ENCODE measurements at regions of chr16 and their contacts with region 1.

Region 1: DNA sequence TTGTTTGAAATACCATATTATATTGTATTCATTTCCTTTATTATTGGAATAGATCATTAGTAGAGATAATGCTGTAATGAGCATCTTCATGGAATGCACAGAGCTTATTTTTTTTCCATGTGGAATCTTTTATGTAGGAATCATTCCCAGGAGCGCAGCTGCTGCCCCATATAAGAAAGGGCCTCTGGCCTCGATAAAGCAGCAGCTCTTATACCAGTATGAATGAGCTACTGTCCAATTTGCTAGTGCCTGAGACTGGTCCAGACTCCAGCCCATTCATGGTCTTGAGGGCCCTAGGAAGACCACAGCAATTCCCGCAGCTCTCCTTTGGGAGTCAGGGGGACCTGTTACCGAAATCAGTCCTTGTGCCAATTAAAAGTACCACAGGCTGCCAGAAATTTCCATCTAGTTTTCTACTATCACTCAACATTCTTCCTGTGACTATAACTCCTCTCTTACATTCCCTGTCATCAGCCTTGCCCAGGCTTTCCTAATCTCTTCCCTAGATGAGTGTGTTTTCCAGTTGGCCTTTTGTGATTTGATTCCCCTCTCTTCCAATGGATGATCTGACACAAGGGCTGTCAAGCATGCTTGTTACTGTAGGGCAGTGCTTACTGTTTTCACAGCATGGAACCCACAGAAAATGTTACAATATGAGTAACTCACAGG is 1.9 kb downstream of the ZNF843 start:
- DNase-seq: no peak
- H3K4me3 ChIP-seq: no peak overlapping the region
- H3K27ac ChIP-seq: no peak overlapping the region
- H3K4me1 ChIP-seq: no peaks in the 10 kb centered on the region
- H3K27me3 ChIP-seq: peaks cover 3 to 11% of the 10 kb centered on the region in 2 experiments
- CTCF ChIP-seq: no peak
- POLR2A ChIP-seq: no peak

Region 2: GRCh38 chr16:30957456-30958174 is 483.0 kb before region 1 on chr16 and contains the start of gene SETD1A:
- CTCF ChIA-PET with region 1: interaction called, 16 read pairs
- POLR2A ChIA-PET with region 1: no interaction called
- dilution Hi-C with region 1: no loop called
- intact Hi-C with region 1: loop called (anchors 1 kb)
- DNase-seq: peak; percentile 90
- H3K4me3 ChIP-seq: peak within 1 kb of the TSS; percentile 60 to 71 (median 67)
- H3K27ac ChIP-seq: peak within 1 kb of the TSS; percentile 100
- H3K4me1 ChIP-seq: peaks cover 12% of the 10 kb centered on the region
- H3K27me3 ChIP-seq: no peaks in the 10 kb centered on the region
- CTCF ChIP-seq: no peak
- POLR2A ChIP-seq: no peak
- total RNA-seq, gene SETD1A: 21.3 and 25.6 TPM in 2 replicates

Region 3: DNA sequence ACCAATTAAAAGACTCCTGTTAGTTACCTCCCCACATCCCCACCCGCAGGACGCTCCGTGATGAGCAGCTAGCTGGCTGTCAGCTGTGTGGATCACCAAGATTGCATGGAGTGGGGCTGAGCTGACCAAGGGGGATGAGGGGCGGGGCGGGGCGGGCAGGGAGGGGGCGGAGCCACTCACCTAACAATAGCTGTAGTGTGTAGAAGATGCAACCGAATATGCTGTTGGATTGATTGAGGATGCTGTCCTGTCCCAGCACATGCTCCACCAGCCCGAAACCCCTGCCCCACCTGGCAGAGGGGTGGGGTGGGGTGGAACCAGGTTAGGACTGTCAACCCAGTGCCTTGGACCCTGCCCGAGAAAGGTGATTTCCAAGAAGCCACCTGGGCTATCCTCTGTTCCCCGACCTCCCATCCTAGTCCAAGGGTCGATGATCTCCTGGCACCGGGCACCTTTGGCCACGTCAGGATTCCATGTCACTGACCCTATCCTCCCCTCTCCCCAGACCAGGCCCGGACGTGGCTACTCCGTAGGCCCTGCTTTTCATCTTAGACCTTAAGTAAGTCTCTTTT is 347.4 kb before region 1 on chr16:
- CTCF ChIA-PET with region 1: no interaction called
- POLR2A ChIA-PET with region 1: no interaction called
- dilution Hi-C with region 1: no loop called
- intact Hi-C with region 1: no loop called
- DNase-seq: no peak
- H3K4me3 ChIP-seq: peak overlapping the region in 1 of 3 experiments; percentile 35
- H3K27ac ChIP-seq: no peak overlapping the region
- H3K4me1 ChIP-seq: peaks cover 3% of the 10 kb centered on the region
- H3K27me3 ChIP-seq: no peaks in the 10 kb centered on the region
- CTCF ChIP-seq: no peak
- POLR2A ChIP-seq: no peak

Region 4: DNA sequence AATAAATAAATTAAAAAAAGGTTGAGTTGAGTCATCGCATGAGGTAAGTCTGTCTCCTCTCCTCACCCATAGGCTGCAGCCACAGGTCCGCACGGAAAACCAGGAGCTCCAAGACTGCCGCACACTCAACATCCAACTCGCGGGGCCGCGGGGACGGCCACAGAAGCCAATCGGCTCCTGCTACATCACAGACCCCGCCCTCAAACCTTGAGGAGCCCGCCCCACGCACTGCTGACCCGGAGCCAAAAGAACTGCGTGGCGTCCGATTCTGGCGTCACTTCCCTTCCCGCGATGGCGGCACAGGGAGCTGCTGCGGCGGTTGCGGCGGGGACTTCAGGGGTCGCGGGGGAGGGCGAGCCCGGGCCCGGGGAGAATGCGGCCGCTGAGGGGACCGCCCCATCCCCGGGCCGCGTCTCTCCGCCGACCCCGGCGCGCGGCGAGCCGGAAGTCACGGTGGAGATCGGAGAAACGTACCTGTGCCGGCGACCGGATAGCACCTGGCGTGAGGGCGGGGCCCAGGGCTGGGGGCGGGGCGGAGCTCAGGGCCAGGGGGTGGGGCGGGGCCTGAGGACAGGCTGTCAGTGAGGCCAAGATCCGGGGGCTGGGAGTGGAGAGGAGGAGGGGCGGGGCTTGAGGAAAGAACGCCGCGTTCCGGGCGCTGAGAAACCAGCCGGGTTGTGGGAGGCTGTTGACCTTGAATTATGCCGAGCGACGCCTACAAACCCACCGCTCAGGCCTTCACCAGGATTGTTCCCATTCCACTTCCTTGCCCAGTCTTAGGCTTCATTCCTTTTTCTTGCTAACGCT is 323.1 kb before region 1 on chr16 and contains the start of gene KAT8:
- CTCF ChIA-PET with region 1: no interaction called
- POLR2A ChIA-PET with region 1: interaction called, 3 read pairs
- dilution Hi-C with region 1: no loop called
- intact Hi-C with region 1: loop called (anchors 1 kb)
- DNase-seq: peak; percentile 98
- H3K4me3 ChIP-seq: peak within 1 kb of the TSS; percentile 54 to 79 (median 79)
- H3K27ac ChIP-seq: peak within 1 kb of the TSS; percentile 77
- H3K4me1 ChIP-seq: peaks cover 7% of the 10 kb centered on the region
- H3K27me3 ChIP-seq: no peaks in the 10 kb centered on the region
- CTCF ChIP-seq: no peak
- POLR2A ChIP-seq: peak; percentile 84
- total RNA-seq, gene KAT8: 42.1 and 42.8 TPM in 2 replicates

Region 5: GRCh38 chr16:31179747-31180459 is 260.7 kb before region 1 on chr16 and contains the start of gene FUS:
- CTCF ChIA-PET with region 1: interaction called, 4 read pairs
- POLR2A ChIA-PET with region 1: no interaction called
- dilution Hi-C with region 1: no loop called
- intact Hi-C with region 1: loop called (anchors 1 kb)
- DNase-seq: peak; percentile 90
- H3K4me3 ChIP-seq: peak within 1 kb of the TSS; percentile 77 to 100 (median 95)
- H3K27ac ChIP-seq: peak within 1 kb of the TSS; percentile 91
- H3K4me1 ChIP-seq: peaks cover 22% of the 10 kb centered on the region
- H3K27me3 ChIP-seq: no peaks in the 10 kb centered on the region
- CTCF ChIP-seq: no peak
- POLR2A ChIP-seq: peak; percentile 100
- total RNA-seq, gene FUS: 569 and 574 TPM in 2 replicates

Region 6: DNA sequence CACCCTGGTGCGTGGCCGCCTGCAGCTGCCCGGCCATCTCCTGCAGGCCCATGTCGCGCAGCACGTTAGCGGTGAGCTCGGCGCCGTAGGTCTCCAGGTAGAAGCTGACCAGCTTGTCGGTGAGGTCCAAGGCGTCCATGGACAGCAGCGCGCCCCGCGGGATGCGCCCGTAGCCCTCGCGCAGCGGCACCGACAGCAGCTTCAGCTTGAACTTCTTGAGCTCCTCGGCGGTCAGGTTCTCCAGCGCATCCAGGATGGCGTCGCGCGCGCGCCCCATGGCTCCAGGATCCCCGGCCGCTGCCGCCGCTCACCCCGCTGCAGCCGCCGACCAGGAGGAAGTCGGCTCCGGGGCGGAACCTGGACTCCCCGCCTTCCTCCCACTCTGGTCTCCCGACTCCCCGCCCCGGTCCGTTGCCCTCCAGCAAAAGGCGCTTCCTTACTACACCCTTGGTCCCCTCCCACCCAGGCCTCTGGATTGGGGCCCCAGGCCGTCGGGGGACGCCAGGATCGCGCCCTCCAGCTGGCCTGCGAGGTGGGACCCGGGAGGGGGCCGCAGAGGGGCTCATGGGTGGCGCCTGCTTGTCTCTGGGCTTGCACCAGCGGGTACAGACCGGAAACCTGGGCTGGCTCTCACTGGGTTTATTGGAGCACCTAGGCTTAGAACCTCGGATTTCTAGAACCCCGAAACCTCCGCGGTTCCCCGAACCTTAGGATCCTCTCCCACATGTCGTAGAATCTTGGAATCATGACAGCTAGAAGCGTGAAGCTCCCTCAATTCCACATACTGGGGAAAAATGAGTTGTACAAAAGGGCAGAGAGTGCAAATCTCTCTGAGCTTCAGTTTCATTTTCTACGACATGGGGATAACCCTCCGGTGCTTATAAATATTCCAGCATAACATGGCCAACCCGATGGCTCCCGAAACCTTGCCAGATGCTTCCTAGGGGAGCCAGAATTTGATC is 238.0 kb before region 1 on chr16 and contains the start of gene PYCARD:
- CTCF ChIA-PET with region 1: interaction called, 12 read pairs
- POLR2A ChIA-PET with region 1: interaction called, 5 read pairs
- dilution Hi-C with region 1: no loop called
- intact Hi-C with region 1: loop called (anchors 2 kb)
- DNase-seq: peak; percentile 36
- H3K4me3 ChIP-seq: peak within 1 kb of the TSS; percentile 26 to 62 (median 36)
- H3K27ac ChIP-seq: no peak within 1 kb of the TSS
- H3K4me1 ChIP-seq: peaks cover 4% of the 10 kb centered on the region
- H3K27me3 ChIP-seq: peaks cover 2 to 6% of the 10 kb centered on the region in 2 experiments
- CTCF ChIP-seq: no peak
- POLR2A ChIP-seq: no peak
- total RNA-seq, gene PYCARD: 19.1 and 23.0 TPM in 2 replicates

Region 7: DNA sequence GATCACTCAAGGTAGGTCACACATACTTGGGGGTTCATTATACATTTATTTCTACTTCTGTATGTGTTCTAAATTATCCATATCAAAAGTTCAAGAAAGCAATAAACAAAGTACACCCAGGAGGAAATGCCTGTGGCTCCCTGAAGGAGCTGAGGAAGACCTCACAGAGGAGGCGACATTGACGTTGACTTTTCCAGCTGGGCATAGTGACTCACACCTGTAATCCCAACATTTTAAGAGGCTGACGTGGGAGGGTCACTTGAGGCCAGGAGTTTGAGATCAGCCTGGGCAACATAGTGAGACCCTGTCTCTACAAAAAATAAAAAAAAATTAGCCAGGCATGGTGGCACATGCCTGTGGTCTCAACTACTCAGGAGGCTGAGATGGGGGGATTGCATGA is 31.2 kb before region 1 on chr16:
- CTCF ChIA-PET with region 1: no interaction called
- POLR2A ChIA-PET with region 1: no interaction called
- dilution Hi-C with region 1: no loop called
- intact Hi-C with region 1: no loop called
- DNase-seq: no peak
- H3K4me3 ChIP-seq: no peak overlapping the region
- H3K27ac ChIP-seq: no peak overlapping the region
- H3K4me1 ChIP-seq: no peaks in the 10 kb centered on the region
- H3K27me3 ChIP-seq: no peaks in the 10 kb centered on the region
- CTCF ChIP-seq: no peak
- POLR2A ChIP-seq: no peak

Region 8: GRCh38 chr16:31451681-31452351 is 11.2 kb after region 1 on chr16:
- CTCF ChIA-PET with region 1: interaction called, 39 read pairs
- POLR2A ChIA-PET with region 1: interaction called, 5 read pairs
- dilution Hi-C with region 1: no loop called
- intact Hi-C with region 1: no loop called
- DNase-seq: peak; percentile 56
- H3K4me3 ChIP-seq: no peak overlapping the region
- H3K27ac ChIP-seq: no peak overlapping the region
- H3K4me1 ChIP-seq: peaks cover 17% of the 10 kb centered on the region
- H3K27me3 ChIP-seq: no peaks in the 10 kb centered on the region
- CTCF ChIP-seq: peak; percentile 46 to 69
- POLR2A ChIP-seq: no peak

Region 9: GRCh38 chr16:31487720-31488467 is 47.2 kb after region 1 on chr16:
- CTCF ChIA-PET with region 1: no interaction called
- POLR2A ChIA-PET with region 1: no interaction called
- dilution Hi-C with region 1: no loop called
- intact Hi-C with region 1: no loop called
- DNase-seq: peak; percentile 21
- H3K4me3 ChIP-seq: peak overlapping the region in 1 of 3 experiments; percentile 35
- H3K27ac ChIP-seq: no peak overlapping the region
- H3K4me1 ChIP-seq: peaks cover 11% of the 10 kb centered on the region
- H3K27me3 ChIP-seq: peaks cover 3 to 24% of the 10 kb centered on the region in 2 experiments
- CTCF ChIP-seq: no peak
- POLR2A ChIP-seq: no peak

Region 10: DNA sequence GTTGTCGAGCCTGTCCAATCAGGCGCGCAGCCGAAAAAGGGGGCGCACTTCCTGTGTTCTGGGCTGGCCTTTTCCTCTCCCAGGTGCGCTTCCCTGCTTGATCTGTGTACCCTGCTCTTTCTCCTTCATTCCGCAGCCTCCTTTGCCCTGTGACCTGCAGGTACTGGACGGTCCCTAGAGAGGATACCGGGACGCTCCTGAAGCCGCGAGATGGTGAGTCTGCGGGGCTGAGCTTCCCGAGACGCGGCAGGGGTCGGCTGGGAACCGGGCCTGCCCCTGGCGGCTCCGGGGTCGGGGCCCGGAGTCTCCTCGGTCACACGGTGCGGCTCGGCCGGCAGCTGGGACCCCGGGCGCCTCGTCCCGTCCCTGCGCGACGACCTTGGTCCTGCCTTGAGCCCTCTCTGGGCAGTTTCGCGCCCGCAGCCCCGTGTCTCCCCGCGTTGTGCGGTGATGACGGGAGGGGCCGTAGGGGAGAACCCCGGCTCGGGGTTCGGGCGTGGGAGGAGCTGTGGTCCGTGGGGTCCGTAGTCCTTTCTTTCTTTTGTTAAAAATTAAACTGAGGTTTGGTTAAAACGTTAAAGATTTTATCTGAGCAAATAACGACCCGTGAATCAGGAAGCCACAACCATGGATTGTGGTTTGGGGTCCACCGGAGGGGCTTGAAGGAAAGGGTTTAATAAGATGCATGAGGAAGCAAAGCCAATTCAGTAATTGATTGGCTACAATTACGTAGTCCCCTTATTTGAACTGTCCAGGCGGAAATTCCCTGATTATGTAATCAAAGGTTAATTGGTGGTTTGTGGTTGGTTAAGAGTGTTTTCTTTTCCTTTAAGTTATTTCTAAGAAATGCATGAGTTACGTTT is 260.1 kb after region 1 on chr16:
- CTCF ChIA-PET with region 1: no interaction called
- POLR2A ChIA-PET with region 1: no interaction called
- dilution Hi-C with region 1: no loop called
- intact Hi-C with region 1: loop called (anchors 5 kb)
- DNase-seq: no peak
- H3K4me3 ChIP-seq: peak overlapping the region in 2 of 3 experiments; percentile 1 to 33
- H3K27ac ChIP-seq: no peak overlapping the region
- H3K4me1 ChIP-seq: no peaks in the 10 kb centered on the region
- H3K27me3 ChIP-seq: peaks cover 11% of the 10 kb centered on the region in 2 experiments
- CTCF ChIP-seq: no peak
- POLR2A ChIP-seq: no peak